ENCODE measurements at regions of chr22 and their contacts with region 1.

Region 1: DNA sequence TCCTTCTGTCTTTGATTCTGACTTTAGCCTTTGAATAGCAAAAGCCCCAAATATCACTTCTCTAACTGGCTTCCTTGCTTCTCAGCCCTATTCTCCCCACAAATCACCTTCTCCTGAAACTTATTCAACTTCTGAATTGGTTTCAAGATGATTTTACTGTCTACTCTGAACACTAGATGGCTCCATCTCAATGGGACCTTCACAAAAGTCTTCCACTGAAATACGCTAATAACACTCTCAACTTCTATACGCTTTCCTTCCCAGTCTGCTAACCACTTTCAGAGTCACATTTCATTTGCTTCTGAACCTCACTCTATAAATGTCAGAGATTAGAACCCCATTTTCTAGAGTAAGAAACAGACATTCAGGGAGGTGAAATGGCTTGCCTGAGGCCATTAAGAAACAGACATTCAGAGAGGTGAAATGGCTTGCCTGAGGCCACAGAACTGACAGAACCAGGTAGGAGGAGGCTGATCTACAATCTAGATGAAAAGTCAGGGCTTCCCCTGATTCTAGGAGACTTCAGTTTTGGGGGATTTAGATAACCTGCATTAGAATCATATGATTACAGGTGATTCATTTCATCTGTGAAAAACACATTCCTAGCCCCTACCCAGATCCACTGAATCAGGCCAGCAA is 20.6 kb downstream of the MORC2 start:
- DNase-seq: no peak
- H3K4me3 ChIP-seq: no peak overlapping the region
- H3K27ac ChIP-seq: peak overlapping the region; percentile 62 to 80
- H3K4me1 ChIP-seq: no peaks in the 10 kb centered on the region
- H3K27me3 ChIP-seq: no peaks in the 10 kb centered on the region
- CTCF ChIP-seq: peak; percentile 66 to 92 (median 78)
- POLR2A ChIP-seq: peak in 1 of 2 donors; percentile 34

Region 2: DNA sequence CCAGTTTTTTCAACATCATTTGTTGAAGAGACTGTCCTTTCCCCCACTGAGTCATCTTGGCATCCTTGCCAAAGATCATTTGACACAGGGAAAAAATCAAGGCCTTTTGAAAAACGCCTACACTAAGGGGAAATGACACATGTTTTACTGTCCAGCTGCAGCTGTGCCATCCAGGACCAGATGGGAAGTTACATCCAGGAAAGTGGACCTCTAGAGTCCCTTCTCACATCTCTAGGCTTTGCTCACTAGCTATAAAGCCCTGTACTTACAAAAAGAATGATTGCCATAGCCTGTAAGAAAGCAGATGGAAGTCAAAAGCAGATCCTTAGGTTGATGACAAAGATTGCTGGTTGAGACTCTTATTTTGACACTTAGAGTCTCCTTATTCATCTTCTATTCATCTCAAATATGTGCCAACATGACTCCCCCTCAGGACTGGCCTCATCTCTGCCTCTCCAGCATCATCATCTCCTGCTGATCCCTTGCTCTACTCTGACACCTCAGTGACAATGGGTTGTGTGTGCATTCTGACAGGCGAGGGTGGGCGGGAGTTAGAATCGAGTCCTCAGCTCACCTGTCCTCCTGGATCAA is 230.5 kb before region 1 on chr22:
- intact Hi-C with region 1: no loop called
- DNase-seq: no peak
- H3K4me3 ChIP-seq: no peak overlapping the region
- H3K27ac ChIP-seq: no peak overlapping the region
- H3K4me1 ChIP-seq: no peaks in the 10 kb centered on the region
- H3K27me3 ChIP-seq: no peaks in the 10 kb centered on the region
- CTCF ChIP-seq: no peak
- POLR2A ChIP-seq: no peak

Region 3: DNA sequence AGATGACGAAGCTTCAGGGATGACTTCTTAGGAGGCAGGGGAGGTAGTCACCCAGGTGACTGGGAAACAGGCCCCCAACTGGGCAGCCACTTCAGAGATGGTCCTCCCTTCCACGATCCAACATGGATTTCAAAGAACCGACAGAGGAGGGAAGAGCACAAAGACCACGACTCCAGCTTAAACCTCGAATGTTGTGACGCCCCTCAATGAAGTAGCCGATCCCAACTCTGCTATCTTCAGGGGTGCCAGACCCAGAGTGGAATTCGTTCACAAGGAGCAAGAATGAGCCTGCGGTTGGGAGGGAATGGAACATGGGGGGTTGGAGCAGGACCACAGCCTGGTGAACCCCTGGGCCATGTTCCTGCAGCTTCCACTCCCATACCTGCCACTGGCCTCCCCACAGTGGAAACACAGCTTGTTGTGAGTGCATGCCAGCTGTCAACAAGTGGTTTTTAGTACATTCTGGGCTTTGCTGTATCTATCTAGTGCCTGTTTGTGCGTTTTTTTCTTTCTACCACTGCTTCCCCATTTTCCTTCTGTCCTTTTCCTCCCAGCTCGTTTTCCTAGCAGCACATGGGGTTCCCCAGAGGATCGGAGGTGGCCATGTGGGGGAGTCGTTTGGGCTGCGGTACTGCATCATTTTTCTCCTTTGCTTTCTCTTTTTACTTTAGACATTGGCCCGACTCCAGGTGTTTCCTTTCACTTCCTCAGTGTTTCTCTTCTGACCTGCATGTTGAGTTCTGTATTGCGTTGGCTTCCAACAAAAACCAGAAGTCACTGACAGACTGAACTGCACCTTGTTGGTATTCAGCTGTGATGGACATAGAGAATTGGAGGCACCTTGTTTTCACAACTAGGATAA is 45.2 kb before region 1 on chr22:
- intact Hi-C with region 1: no loop called
- DNase-seq: no peak
- H3K4me3 ChIP-seq: no peak overlapping the region
- H3K27ac ChIP-seq: no peak overlapping the region
- H3K4me1 ChIP-seq: no peaks in the 10 kb centered on the region
- H3K27me3 ChIP-seq: no peaks in the 10 kb centered on the region
- CTCF ChIP-seq: no peak
- POLR2A ChIP-seq: no peak

Region 4: DNA sequence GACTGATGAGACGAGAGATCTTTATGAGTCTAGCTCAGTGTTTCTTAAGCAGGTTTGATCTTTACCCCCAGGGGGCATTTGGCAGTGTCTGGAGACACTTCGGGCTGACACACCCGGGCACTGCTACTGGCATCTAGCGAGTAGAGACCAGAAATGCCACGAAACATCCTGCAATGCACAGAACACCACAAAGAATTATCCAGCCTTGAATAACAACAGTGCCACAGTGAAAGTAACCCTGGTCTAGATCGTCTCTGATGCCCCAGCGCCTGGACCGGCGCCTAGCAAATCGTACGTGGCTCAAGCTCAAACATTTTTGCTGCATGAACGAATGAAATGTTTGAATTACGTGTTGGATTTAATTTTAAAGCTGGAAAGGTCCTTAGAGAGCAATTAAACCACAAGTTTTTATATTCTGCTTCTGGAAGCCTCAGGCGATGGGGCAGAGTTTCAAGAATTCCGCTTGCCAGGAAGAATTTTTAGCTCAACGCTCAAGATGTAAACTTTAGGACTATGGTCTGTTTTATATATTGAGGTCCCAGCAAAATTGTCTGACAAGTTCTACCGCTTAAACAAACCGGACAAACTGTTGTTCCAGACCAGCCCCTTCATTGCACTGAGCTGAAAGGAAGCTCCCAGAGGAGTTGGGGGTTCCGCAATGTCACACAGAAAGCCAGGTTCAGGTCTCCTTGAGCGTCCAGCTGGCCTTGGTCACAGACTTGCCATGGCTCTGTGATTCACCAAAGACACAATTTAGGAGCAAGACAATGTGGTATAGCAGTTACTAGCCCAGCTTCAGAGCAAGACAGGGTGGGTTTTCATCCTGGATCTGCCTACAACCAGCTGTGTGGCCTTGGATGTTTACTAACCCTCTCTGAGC is 89.0 kb after region 1 on chr22:
- intact Hi-C with region 1: loop called (anchors 10 kb)
- DNase-seq: peak; percentile 73 to 77
- H3K4me3 ChIP-seq: peak overlapping the region in 1 of 2 donors; percentile 6
- H3K27ac ChIP-seq: peak overlapping the region; percentile 90 to 97
- H3K4me1 ChIP-seq: peaks cover 17 to 21% of the 10 kb centered on the region in 2 donors
- H3K27me3 ChIP-seq: no peaks in the 10 kb centered on the region
- CTCF ChIP-seq: peak in 1 of 4 experiments; percentile 21
- POLR2A ChIP-seq: peak; percentile 14 to 17

Measured in uterus (tissue), 4 donors.